Natural killer cell (primary cell): ENCODE measurements at regions of chr1 and their contacts with region 1.

Region 1: GRCh38 chr1:159161001-159161718 is 10.3 kb upstream of the CADM3 start:
- DNase-seq: peak; percentile 44 to 75
- ATAC-seq: peak; percentile 88 to 100 (median 95)
- H3K4me3 ChIP-seq: no peak overlapping the region
- H3K4me3 Mint-ChIP-seq: no peak overlapping the region
- H3K27ac ChIP-seq: no peak overlapping the region
- H3K27ac Mint-ChIP-seq: no peak overlapping the region
- H3K4me1 ChIP-seq: no peaks in the 10 kb centered on the region
- H3K4me1 Mint-ChIP-seq: peaks cover 0 to 8% of the 10 kb centered on the region in 2 donors
- H3K27me3 ChIP-seq: peaks cover 5% of the 10 kb centered on the region
- H3K27me3 Mint-ChIP-seq: peaks cover 42 to 51% of the 10 kb centered on the region in 2 donors
- CTCF ChIP-seq: peak; percentile 84

Region 2: DNA sequence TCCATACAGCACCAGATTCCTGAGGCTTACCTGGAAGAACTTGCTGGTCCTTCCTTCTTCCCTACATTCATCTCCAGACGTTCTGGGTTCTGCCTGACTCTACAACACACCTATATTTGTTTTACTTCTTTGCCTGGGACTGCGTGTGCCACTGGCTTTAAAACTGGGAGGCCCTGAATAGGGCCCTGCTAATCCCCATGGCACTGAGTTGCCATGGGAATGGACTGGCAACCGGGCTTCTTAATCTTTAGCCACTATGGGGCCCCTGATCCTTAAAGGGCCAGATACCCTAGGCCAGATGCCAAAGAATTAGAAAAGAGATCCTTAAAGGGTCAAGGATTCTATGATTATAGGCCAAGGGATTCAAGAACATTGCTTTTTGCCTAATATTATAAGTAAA is 14.2 kb before region 1 on chr1:
- intact Hi-C with region 1: loop called (anchors 1 kb)
- DNase-seq: no peak
- ATAC-seq: no peak
- H3K4me3 ChIP-seq: no peak overlapping the region
- H3K4me3 Mint-ChIP-seq: no peak overlapping the region
- H3K27ac ChIP-seq: no peak overlapping the region
- H3K27ac Mint-ChIP-seq: no peak overlapping the region
- H3K4me1 ChIP-seq: no peaks in the 10 kb centered on the region
- H3K4me1 Mint-ChIP-seq: no peaks in the 10 kb centered on the region
- H3K27me3 ChIP-seq: peaks cover 2% of the 10 kb centered on the region
- H3K27me3 Mint-ChIP-seq: peaks cover 18 to 24% of the 10 kb centered on the region in 2 donors
- CTCF ChIP-seq: no peak

Region 3: GRCh38 chr1:159211331-159212136 is 50.4 kb after region 1 on chr1:
- intact Hi-C with region 1: loop called (anchors 2 kb)
- DNase-seq: peak; percentile 22 to 66
- ATAC-seq: peak in 2 of 3 donors; percentile 55 to 62
- H3K4me3 ChIP-seq: no peak overlapping the region
- H3K4me3 Mint-ChIP-seq: no peak overlapping the region
- H3K27ac ChIP-seq: no peak overlapping the region
- H3K27ac Mint-ChIP-seq: no peak overlapping the region
- H3K4me1 ChIP-seq: no peaks in the 10 kb centered on the region
- H3K4me1 Mint-ChIP-seq: no peaks in the 10 kb centered on the region
- H3K27me3 ChIP-seq: peaks cover 4% of the 10 kb centered on the region
- H3K27me3 Mint-ChIP-seq: peaks cover 45 to 71% of the 10 kb centered on the region in 2 donors
- CTCF ChIP-seq: peak; percentile 83

Region 4: GRCh38 chr1:159891275-159892157 is 730.4 kb after region 1 on chr1:
- intact Hi-C with region 1: loop called (anchors 1 kb)
- DNase-seq: peak; percentile 76 to 90
- ATAC-seq: peak; percentile 96 to 99 (median 97)
- H3K4me3 ChIP-seq: no peak overlapping the region
- H3K4me3 Mint-ChIP-seq: no peak overlapping the region
- H3K27ac ChIP-seq: no peak overlapping the region
- H3K27ac Mint-ChIP-seq: peak overlapping the region; percentile 14 to 37
- H3K4me1 ChIP-seq: peaks cover 28% of the 10 kb centered on the region
- H3K4me1 Mint-ChIP-seq: peaks cover 21 to 30% of the 10 kb centered on the region in 2 donors
- H3K27me3 ChIP-seq: no peaks in the 10 kb centered on the region
- H3K27me3 Mint-ChIP-seq: peaks cover 0 to 5% of the 10 kb centered on the region in 2 donors
- CTCF ChIP-seq: peak; percentile 100

Region 5: DNA sequence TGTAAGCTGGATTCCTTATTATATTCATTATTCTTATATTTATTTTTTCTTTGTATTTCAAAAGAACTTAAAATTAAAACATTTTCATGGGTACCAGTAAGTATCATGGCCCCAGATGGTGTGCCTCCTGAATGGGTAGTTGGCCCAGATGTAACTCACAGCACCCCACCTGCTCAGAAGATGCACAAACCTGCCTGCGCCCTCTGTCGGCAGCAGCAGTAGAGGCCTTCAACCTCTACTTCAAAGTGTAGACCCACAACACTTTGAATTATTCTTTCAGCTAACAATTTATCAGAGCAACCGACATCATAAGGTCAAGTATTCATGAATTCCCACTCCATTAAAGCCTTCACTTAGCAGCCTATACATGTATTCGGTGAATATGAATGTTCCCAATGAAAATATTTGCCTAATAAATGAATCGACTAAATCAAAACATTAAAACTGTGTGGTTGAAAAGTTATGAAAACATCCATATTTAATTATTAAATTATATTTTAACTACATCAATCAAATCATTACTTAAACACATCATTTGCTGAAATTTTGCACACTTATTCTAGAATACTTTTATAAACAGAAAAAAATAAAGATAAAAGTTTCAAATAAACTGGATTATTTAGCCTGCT is 845.3 kb after region 1 on chr1:
- intact Hi-C with region 1: loop called (anchors 5 kb)
- DNase-seq: peak; percentile 55 to 86
- ATAC-seq: peak; percentile 75 to 84 (median 83)
- H3K4me3 ChIP-seq: no peak overlapping the region
- H3K4me3 Mint-ChIP-seq: no peak overlapping the region
- H3K27ac ChIP-seq: no peak overlapping the region
- H3K27ac Mint-ChIP-seq: no peak overlapping the region
- H3K4me1 ChIP-seq: no peaks in the 10 kb centered on the region
- H3K4me1 Mint-ChIP-seq: no peaks in the 10 kb centered on the region
- H3K27me3 ChIP-seq: no peaks in the 10 kb centered on the region
- H3K27me3 Mint-ChIP-seq: peaks cover 8 to 9% of the 10 kb centered on the region in 2 donors
- CTCF ChIP-seq: peak; percentile 75